Activated CD4-positive, alpha-beta T cell treated with anti-CD3 and anti-CD28 coated beads, Interleukin-2, amount 10 ng/mL, durations not matched to agents 24 days and 14 days (primary cell): ENCODE measurements at regions of chr6 and their contacts with region 1.

Region 1: DNA sequence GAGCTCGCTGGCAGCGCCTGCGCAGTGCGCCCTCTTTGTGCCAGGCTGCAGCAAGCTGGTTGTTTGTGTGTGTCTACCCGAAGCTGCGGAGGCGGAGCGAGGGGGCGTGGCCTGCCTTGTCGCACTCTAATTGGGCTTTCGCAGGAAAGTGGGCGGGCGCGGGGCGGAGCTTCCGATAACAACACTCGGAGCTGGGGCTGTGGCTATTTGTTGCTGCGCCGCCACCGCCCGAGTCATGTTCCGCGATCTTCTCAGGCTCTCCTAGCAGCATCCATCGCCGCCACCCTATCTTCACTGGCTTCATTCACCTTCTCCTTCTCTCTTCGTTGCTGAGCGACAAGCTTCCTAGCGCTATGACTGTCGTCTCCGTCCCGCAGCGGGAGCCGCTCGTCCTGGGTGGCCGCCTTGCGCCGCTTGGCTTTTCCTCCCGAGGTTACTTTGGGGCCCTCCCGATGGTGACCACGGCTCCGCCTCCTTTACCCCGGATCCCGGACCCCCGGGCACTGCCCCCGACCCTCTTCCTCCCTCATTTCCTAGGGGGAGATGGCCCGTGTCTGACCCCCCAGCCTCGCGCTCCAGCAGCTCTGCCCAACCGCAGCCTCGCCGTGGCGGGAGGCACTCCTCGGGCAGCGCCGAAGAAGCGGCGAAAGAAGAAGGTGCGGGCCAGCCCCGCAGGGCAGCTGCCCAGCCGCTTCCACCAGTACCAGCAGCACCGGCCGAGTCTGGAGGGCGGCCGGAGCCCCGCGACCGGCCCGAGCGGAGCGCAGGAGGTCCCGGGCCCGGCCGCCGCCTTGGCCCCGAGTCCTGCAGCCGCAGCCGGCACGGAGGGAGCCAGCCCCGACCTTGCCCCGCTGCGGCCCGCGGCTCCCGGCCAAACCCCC is at the start of gene PNRC1:
- DNase-seq: peak; percentile 100
- H3K4me3 Mint-ChIP-seq: peak within 1 kb of the TSS; percentile 89
- H3K27ac Mint-ChIP-seq: peak within 1 kb of the TSS; percentile 98
- H3K4me1 Mint-ChIP-seq: peaks cover 26% of the 10 kb centered on the region
- H3K27me3 Mint-ChIP-seq: no peaks in the 10 kb centered on the region
- total RNA-seq, gene PNRC1: 48.3 and 51.2 TPM in 2 replicates

Region 2: DNA sequence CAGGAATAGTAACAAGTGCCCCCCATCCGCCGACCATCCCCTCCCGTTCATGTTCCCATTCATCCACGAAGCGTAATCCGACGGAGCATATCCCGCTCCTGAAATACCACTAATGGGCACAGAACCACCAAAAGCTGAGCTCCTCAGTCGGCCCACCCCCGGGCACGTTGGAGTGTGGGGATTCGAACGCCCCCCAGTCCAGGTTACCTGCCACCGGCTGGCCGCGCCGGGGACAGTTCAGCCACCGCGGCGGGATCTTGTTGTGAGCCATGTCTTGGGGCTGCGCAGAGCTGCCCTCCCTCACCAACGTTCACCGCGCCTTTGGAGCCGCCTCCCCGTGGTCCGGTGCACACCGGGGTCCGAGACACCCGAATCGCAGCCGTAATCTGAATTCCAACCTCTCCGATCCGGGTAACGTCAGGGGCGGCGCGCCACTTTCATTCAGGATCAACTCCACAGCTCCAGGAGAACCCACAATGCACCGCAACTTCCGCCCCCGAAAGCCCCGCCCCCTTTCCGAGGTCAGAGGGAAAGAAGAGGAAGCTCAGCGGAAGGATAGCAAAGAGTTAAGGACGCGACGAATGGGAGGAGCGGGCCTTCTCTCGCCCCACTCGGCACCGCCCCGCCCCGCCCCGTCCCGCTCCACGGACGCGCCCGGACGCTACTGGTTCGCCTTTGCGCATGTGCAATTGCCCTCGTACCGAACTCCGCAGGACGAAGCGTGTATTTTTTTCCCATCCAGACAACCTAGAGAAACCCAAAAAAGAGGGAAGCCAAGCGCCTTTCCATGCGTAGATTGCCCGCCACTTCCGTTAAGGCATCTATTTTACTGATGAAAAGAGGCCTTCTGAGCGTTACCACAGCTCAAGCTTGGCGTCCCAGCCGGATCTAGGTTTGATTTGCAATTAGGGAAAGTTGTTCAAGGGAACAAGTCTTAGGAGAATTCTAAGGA is 117.4 kb before region 1 on chr6 and contains the start of gene RNGTT:
- intact Hi-C with region 1: loop called (anchors 1 kb)
- DNase-seq: peak; percentile 99
- H3K4me3 Mint-ChIP-seq: peak within 1 kb of the TSS; percentile 98
- H3K27ac Mint-ChIP-seq: peak within 1 kb of the TSS; percentile 94
- H3K4me1 Mint-ChIP-seq: peaks cover 25% of the 10 kb centered on the region
- H3K27me3 Mint-ChIP-seq: peaks cover 4% of the 10 kb centered on the region
- total RNA-seq, gene RNGTT: 23.8 and 25.9 TPM in 2 replicates

Region 3: GRCh38 chr6:89058627-89059026 is 22.2 kb before region 1 on chr6:
- intact Hi-C with region 1: no loop called
- DNase-seq: no peak
- H3K4me3 Mint-ChIP-seq: no peak overlapping the region
- H3K27ac Mint-ChIP-seq: no peak overlapping the region
- H3K4me1 Mint-ChIP-seq: no peaks in the 10 kb centered on the region
- H3K27me3 Mint-ChIP-seq: peaks cover 2% of the 10 kb centered on the region

Region 4: GRCh38 chr6:89117211-89118108 is 36.7 kb after region 1 on chr6 and contains the start of gene SRSF12:
- intact Hi-C with region 1: loop called (anchors 2 kb)
- DNase-seq: peak; percentile 73
- H3K4me3 Mint-ChIP-seq: peak within 1 kb of the TSS; percentile 85
- H3K27ac Mint-ChIP-seq: no peak within 1 kb of the TSS
- H3K4me1 Mint-ChIP-seq: peaks cover 6% of the 10 kb centered on the region
- H3K27me3 Mint-ChIP-seq: peaks cover 39% of the 10 kb centered on the region
- total RNA-seq, gene SRSF12: 0.05 TPM in 1 of 2 replicates, not detected in the other

Region 5: DNA sequence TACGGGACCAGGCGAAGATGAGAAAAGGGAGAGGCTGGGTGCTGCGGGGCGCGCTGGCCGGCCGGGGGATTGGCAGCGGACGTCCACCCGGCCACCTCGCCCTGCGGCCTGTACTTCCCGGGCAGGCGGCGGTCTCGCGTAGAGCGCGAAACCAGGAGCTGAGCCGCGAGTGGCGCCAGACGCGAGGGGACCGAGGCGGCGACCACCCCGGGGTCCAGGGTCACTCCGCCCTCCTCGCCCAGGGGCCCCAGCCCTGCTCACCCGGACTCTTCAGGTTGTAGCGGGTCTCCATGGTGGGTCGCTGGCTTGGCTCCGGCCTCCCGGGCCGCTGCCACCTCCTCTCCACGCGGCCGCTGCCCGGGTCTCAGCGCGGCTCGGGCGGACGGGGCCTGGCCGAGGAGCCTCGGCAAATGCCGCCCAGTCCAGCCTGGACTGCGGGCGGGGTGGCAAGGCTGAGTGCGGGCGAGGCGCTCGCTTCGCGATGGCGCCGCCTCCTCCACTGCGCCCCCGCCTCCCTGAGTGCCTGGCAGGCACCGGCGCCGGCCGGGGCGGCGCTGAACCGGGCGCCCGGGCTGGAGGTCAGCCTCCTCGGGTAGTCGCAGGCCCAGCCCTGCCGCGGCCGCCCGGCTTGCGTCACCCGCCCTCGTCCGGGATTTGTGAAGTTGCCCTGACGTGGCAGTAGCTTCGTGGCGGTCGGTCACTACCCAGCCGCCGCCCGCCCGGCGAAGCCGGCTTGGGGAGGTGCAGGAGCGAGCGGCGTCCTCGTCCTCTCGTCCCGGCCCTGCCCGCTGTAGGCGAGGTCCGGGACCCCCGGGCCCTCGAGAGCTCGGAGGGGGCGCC is 271.7 kb after region 1 on chr6 and contains the start of gene UBE2J1:
- intact Hi-C with region 1: loop called (anchors 1 kb)
- DNase-seq: peak; percentile 94
- H3K4me3 Mint-ChIP-seq: peak within 1 kb of the TSS; percentile 91
- H3K27ac Mint-ChIP-seq: peak within 1 kb of the TSS; percentile 94
- H3K4me1 Mint-ChIP-seq: peaks cover 66% of the 10 kb centered on the region
- H3K27me3 Mint-ChIP-seq: no peaks in the 10 kb centered on the region
- total RNA-seq, gene UBE2J1: 31.6 and 33.5 TPM in 2 replicates

Region 6: DNA sequence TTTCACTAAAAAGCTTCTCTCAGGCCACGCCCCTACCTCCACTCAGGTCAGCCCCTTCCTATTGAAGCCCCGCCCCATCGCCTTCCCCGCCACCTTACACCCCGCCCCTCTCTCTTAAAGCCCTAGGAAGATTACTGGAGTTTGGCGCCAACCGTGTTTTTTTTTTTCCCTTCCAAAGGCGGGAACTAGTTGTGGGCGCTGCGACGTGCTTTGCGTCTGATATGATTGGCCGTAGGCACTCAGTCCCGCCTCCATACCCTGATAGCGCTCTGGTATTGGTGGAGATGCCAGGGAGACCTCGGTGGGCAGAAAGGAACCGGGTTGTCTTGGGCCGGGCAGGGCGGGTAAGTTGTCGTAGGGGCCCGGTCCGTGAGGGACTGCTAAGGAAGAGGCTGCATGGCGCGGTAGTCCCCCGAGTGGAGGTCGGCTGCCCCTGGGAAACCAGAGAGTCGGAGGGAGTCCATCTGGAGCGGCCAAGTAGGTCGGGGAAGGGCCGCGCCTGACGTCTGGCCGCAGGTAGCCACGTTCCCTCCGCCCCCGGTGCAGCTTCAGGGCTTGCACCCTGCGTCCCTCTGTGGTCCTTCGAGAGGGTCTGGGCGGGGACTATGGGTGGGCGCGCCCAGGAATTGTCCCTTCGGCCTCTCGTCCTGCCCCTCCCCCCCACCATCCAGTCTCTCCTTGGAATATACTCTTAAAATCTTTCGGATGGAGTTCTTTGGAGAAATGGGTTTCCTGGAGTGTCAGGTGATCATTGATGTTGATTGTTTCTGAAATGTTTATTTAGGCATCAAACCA is 749.0 kb after region 1 on chr6 and contains the start of gene CASP8AP2:
- intact Hi-C with region 1: loop called (anchors 5 kb)
- DNase-seq: peak; percentile 98
- H3K4me3 Mint-ChIP-seq: peak within 1 kb of the TSS; percentile 99
- H3K27ac Mint-ChIP-seq: peak within 1 kb of the TSS; percentile 98
- H3K4me1 Mint-ChIP-seq: peaks cover 25% of the 10 kb centered on the region
- H3K27me3 Mint-ChIP-seq: no peaks in the 10 kb centered on the region
- total RNA-seq, gene CASP8AP2: 37.3 and 37.8 TPM in 2 replicates